ENCODE measurements at regions of chr1 and their contacts with region 1.

Region 1: GRCh38 chr1:45065083-45065482 is 53.0 kb downstream of the UROD start:
- DNase-seq: no peak
- ATAC-seq: no peak
- H3K4me3 ChIP-seq: no peak overlapping the region
- H3K4me3 Mint-ChIP-seq: no peak overlapping the region
- H3K27ac ChIP-seq: no peak overlapping the region
- H3K27ac Mint-ChIP-seq: no peak overlapping the region
- H3K4me1 ChIP-seq: no peaks in the 10 kb centered on the region
- H3K4me1 Mint-ChIP-seq: no peaks in the 10 kb centered on the region
- H3K27me3 ChIP-seq: no peaks in the 10 kb centered on the region
- H3K27me3 Mint-ChIP-seq: no peaks in the 10 kb centered on the region
- CTCF ChIP-seq: no peak

Region 2: GRCh38 chr1:44903011-44903680 is 161.9 kb before region 1 on chr1:
- CTCF ChIA-PET with region 1: no interaction called
- POLR2A ChIA-PET with region 1: no interaction called
- intact Hi-C with region 1: no loop called
- DNase-seq: no peak
- ATAC-seq: no peak
- H3K4me3 ChIP-seq: no peak overlapping the region
- H3K4me3 Mint-ChIP-seq: no peak overlapping the region
- H3K27ac ChIP-seq: no peak overlapping the region
- H3K27ac Mint-ChIP-seq: no peak overlapping the region
- H3K4me1 ChIP-seq: no peaks in the 10 kb centered on the region
- H3K4me1 Mint-ChIP-seq: no peaks in the 10 kb centered on the region
- H3K27me3 ChIP-seq: no peaks in the 10 kb centered on the region
- H3K27me3 Mint-ChIP-seq: no peaks in the 10 kb centered on the region
- CTCF ChIP-seq: no peak

Region 3: DNA sequence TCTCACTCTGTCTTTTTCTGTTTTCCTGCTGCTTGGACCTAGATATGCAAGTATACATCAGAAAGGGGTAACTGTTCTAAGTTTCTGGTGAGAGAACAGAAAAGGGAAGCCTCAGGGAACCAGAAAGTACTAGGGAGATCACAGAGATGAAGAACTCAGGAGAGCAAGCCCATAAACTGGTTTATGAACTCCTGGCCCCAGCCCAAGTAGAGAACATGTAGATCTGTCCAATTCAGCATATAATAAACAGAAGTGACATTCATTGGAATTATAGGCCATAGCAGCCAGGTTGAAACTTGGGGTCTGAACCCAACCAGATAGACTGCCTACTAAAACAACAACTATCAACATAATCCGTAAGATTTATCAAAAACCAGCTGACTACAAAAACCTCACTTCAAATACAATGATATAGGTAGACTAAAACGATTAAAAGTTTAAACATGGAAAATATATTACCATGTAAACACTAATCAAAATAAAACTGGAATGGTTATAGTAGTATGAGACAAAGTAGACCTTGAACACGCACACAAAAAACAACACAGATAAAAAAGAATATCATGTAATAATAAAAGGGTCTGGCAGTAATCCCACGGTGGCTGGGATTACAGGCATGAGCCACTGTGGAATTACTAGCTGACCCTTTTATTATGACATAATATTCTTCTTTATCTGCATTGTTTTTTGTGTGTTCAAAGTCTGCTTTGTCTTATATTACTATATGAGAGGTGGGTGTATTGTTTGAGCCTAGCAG is 76.3 kb after region 1 on chr1:
- CTCF ChIA-PET with region 1: no interaction called
- POLR2A ChIA-PET with region 1: no interaction called
- intact Hi-C with region 1: loop called in 1 of 2 experiments (anchors 5 kb)
- DNase-seq: no peak
- ATAC-seq: no peak
- H3K4me3 ChIP-seq: no peak overlapping the region
- H3K4me3 Mint-ChIP-seq: no peak overlapping the region
- H3K27ac ChIP-seq: no peak overlapping the region
- H3K27ac Mint-ChIP-seq: no peak overlapping the region
- H3K4me1 ChIP-seq: no peaks in the 10 kb centered on the region
- H3K4me1 Mint-ChIP-seq: no peaks in the 10 kb centered on the region
- H3K27me3 ChIP-seq: no peaks in the 10 kb centered on the region
- H3K27me3 Mint-ChIP-seq: peaks cover 5% of the 10 kb centered on the region
- CTCF ChIP-seq: no peak